ENCODE measurements at regions of chr1 and their contacts with region 1.

Region 1: DNA sequence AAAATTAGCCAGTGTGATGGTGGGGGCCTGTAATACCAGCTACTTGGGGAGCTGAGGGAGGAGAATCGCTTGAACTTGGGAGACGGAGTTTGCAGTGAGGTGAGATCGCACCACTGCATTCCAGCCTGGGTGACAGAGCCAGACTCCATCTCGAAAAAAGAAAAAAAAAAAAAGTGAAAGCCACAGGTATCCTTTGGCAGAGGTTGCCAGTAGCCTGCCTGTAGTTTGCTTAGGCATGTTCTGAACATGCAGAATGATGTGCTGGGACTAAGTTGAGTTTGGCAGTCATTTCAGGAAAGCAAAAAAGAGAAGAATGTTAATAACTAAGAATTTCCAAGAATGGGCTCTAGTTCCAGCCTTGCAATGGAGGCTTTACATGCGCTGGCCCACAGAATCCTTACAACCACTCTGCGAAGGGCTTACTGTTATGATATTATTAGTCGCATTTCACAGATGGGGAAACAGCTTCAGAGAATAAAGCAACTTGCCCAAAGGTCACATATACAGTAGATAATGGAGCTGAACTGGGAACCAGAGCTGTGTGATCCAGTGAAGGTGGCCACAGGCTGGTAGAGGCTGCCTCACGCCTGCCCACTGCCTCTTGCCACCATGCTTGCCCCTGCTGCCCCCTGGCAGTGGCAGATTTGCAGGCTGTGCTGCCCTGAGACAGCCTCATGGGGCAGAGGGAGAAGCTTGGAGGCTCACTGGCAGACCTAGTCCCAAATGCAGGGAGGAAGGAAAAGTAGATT is 66.5 kb upstream of the LYST start:
- DNase-seq: no peak
- H3K4me3 ChIP-seq: no peak overlapping the region
- H3K27ac ChIP-seq: peak overlapping the region; percentile 61; the same call in 1 of the 2 replicates
- H3K4me1 ChIP-seq: peaks cover 42% of the 10 kb centered on the region
- H3K27me3 ChIP-seq: no peaks in the 10 kb centered on the region
- CTCF ChIP-seq: no peak

Region 2: DNA sequence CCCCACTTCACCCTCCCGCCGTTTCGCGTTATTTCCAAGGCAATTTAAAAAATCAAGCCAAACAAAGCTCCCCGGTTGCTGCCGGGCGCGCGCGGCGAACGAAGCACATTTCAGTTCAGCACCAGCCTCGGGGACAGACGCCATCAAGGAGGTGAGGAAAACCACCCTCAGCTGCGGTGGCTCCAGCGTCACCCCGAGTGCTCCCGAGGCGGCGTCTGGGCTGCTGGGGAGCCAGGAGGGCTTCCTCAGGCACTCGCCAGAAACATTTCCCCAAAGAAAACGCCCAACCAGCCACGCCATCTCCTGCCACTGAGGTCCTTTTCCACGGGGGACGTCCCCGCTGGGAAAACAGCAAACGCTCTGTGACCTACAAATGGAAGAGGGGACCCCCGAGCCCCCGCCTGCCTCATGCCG is 284.2 kb before region 1 on chr1:
- CTCF ChIA-PET with region 1: no interaction called
- POLR2A ChIA-PET with region 1: no interaction called
- intact Hi-C with region 1: no loop called
- DNase-seq: peak; percentile 40 to 65
- H3K4me3 ChIP-seq: peak overlapping the region; percentile 76
- H3K27ac ChIP-seq: no peak overlapping the region
- H3K4me1 ChIP-seq: peaks cover 5% of the 10 kb centered on the region
- H3K27me3 ChIP-seq: no peaks in the 10 kb centered on the region
- CTCF ChIP-seq: no peak

Region 3: DNA sequence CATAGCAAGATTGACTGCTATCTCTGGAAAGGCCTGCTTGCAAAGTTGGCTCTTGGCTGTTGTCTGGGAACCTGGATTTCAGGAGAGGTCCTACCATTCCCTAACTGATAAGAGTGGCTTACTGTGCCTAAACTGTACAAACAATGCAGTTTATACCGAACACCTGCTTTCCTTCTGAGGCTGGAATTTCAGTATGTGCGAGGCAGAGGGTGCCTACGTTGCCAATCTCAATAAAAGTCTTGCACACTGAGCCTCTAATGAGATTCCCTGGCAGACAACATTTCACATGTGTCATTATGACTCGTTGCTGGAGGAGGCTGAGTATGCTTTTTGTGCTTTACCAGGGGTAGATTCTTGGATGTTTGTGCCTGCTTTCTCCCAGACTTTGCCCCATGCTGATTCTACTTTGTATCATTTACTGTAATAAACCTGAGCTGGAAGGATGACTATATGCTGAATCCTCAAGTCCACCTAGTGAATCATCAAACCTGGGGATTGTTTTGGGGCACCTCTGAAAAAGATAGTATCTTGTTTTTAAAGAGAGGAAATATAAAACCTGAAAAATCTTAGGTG is 224.7 kb before region 1 on chr1:
- CTCF ChIA-PET with region 1: no interaction called
- POLR2A ChIA-PET with region 1: no interaction called
- intact Hi-C with region 1: loop called (anchors 5 kb)
- DNase-seq: peak; percentile 58 to 82
- H3K4me3 ChIP-seq: no peak overlapping the region
- H3K27ac ChIP-seq: peak overlapping the region; percentile 88
- H3K4me1 ChIP-seq: peaks cover 54% of the 10 kb centered on the region
- H3K27me3 ChIP-seq: no peaks in the 10 kb centered on the region
- CTCF ChIP-seq: no peak

Region 4: GRCh38 chr1:235883261-235883927 is 49.8 kb before region 1 on chr1:
- CTCF ChIA-PET with region 1: no interaction called
- POLR2A ChIA-PET with region 1: interaction called, 11 read pairs
- intact Hi-C with region 1: loop called (anchors 1 kb)
- DNase-seq: peak; percentile 89
- H3K4me3 ChIP-seq: peak overlapping the region; percentile 13; the same call in 1 of the 2 replicates
- H3K27ac ChIP-seq: peak overlapping the region; percentile 32
- H3K4me1 ChIP-seq: peaks cover 15% of the 10 kb centered on the region
- H3K27me3 ChIP-seq: no peaks in the 10 kb centered on the region
- CTCF ChIP-seq: no peak

Region 5: DNA sequence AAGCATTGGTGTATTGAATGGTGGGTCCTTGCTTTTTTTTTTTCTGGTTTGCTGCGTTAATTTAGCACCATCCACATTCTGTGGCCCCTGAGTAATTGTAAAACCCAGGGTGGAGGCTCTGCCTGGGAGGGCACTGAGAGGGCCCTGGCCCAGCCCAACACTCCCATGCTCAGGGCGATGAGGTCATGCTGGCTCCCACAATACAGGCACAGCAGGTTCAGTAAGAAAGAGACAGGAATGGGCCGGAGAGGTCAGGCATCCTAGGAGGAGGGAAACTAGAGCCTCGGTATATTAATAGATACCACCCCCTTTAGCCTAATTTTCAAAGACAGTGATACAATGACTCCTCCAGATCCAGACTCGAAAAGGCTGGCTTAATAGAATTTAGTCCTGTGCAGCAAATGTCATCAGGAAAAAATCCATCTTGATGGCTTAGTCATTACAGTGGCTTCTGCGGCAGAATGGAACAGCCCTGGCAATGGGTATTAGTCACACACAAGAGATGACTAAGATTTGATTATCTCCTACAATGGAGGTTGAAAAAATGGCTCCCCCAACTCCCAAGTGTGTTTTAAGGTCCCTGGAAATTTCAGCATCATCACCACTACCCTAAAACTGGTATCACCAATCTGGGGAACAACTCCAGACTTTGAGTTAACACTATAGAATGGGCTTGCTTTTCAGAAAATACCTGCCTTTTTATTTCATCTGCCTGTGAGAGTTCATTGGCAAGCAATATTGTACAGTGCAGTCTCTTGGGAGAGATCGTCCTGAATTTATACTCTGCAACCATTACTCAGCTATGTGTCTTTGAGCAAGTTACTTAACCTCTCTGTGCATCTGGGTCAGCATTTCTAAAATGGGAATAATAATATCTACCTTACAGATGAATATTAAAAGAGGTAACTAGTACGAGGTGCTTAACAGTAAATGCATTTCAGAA is 22.6 kb before region 1 on chr1:
- CTCF ChIA-PET with region 1: interaction called, 7 read pairs
- POLR2A ChIA-PET with region 1: no interaction called
- intact Hi-C with region 1: loop called (anchors 1 kb)
- DNase-seq: peak; percentile 93 to 97
- H3K4me3 ChIP-seq: peak overlapping the region; percentile 45; the same call in 1 of the 2 replicates
- H3K27ac ChIP-seq: peak overlapping the region; percentile 99
- H3K4me1 ChIP-seq: peaks cover 78% of the 10 kb centered on the region
- H3K27me3 ChIP-seq: no peaks in the 10 kb centered on the region
- CTCF ChIP-seq: no peak

Measured in PC-9 (cell line).